ENCODE measurements at regions of chr12 and their contacts with region 1.

Region 1: DNA sequence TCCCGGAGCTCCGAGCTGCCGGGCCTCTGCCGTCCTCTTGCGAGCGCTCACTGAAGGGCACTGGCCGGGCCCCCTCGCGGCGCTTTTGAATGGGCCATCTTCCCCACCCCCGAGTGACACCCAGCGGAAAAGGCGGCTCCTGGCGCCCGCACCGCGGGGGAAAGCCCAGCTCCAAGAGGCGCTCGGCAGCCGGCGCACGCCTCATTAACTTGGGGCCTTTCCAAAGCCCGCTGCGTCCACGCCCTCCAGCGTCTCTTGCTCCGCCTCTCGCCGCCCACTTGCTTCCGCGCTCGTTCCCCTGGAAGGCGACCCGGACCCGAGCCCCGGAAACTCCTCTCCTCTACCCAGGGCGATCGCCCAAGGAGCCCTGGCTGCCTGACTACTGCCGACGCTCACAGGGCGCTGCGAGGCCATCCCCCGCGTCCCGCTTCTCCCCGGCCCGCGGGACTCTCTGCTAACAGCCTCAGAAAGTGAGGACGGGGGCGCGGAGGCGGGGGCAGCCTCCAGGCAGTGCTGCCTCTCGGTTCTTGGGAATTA is at the start of gene PHLDA1:
- DNase-seq: peak in 1 of 2 experiments; percentile 84
- H3K4me3 ChIP-seq: peak within 1 kb of the TSS; percentile 89 to 94 (median 92)
- H3K27ac ChIP-seq: peak within 1 kb of the TSS; percentile 54; the same call in 1 of the 2 replicates
- H3K4me1 ChIP-seq: peaks cover 0 to 11% (median 2%) of the 10 kb centered on the region in 4 experiments; a peak in 5 of 7 replicates
- H3K27me3 ChIP-seq: no peaks in the 10 kb centered on the region; a peak in 1 of 7 replicates
- CTCF ChIP-seq: peak; percentile 39 to 74 (median 42)
- EP300 ChIP-seq: no peak
- POLR2A ChIP-seq: peak; percentile 2 to 42; a peak in 1 of 3 replicates
- RAD21 ChIP-seq: peak; percentile 64 to 68
- total RNA-seq, gene PHLDA1: 19.4 and 19.8 TPM in 2 replicates

Region 2: GRCh38 chr12:75480469-75480949 is 551.1 kb before region 1 on chr12 and contains the start of gene GLIPR1:
- CTCF ChIA-PET with region 1: interaction called, 12 read pairs
- POLR2A ChIA-PET with region 1: interaction called, 3 read pairs
- DNase-seq: no peak
- H3K4me3 ChIP-seq: no peak within 1 kb of the TSS
- H3K27ac ChIP-seq: no peak within 1 kb of the TSS
- H3K4me1 ChIP-seq: peaks cover 0 to 8% (median 5%) of the 10 kb centered on the region in 4 experiments; a peak in 5 of 7 replicates
- H3K27me3 ChIP-seq: no peaks in the 10 kb centered on the region
- CTCF ChIP-seq: no peak
- EP300 ChIP-seq: no peak
- POLR2A ChIP-seq: no peak
- RAD21 ChIP-seq: no peak
- total RNA-seq, gene GLIPR1: 1.5 and 1.7 TPM in 2 replicates

Region 3: DNA sequence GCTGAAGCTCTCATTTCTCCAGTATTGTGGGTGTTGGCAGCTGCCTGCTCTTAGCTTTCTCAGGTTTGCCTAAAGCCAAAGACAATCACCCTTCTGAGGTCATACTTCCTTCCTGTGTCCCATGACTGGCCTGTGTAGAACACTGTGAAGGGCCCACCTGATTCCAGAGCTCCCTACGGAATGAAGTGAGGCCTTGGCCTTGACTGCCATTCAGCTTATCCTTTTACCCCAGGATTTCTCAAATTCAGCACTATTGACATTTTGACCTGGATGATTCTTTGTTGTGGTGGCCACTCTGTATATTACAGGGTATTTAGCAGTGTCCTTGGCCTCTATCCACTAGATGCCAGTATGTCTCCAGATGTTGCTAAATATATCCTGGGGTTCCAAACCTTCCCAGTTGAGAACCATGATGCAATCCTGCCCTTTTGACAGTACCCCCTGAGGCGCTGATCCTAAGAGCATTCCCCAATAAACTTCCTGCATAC is 407.9 kb before region 1 on chr12:
- CTCF ChIA-PET with region 1: interaction called, 32 read pairs
- POLR2A ChIA-PET with region 1: interaction called, 4 read pairs
- DNase-seq: no peak
- H3K4me3 ChIP-seq: no peak overlapping the region
- H3K27ac ChIP-seq: no peak overlapping the region
- H3K4me1 ChIP-seq: peaks cover 0 to 4% (median 0%) of the 10 kb centered on the region in 4 experiments; a peak in 1 of 7 replicates
- H3K27me3 ChIP-seq: no peaks in the 10 kb centered on the region
- CTCF ChIP-seq: peak in 2 of 3 experiments; percentile 67 to 85; a peak in 3 of 4 replicates
- EP300 ChIP-seq: no peak
- POLR2A ChIP-seq: no peak
- RAD21 ChIP-seq: peak; percentile 87 to 92

Region 4: DNA sequence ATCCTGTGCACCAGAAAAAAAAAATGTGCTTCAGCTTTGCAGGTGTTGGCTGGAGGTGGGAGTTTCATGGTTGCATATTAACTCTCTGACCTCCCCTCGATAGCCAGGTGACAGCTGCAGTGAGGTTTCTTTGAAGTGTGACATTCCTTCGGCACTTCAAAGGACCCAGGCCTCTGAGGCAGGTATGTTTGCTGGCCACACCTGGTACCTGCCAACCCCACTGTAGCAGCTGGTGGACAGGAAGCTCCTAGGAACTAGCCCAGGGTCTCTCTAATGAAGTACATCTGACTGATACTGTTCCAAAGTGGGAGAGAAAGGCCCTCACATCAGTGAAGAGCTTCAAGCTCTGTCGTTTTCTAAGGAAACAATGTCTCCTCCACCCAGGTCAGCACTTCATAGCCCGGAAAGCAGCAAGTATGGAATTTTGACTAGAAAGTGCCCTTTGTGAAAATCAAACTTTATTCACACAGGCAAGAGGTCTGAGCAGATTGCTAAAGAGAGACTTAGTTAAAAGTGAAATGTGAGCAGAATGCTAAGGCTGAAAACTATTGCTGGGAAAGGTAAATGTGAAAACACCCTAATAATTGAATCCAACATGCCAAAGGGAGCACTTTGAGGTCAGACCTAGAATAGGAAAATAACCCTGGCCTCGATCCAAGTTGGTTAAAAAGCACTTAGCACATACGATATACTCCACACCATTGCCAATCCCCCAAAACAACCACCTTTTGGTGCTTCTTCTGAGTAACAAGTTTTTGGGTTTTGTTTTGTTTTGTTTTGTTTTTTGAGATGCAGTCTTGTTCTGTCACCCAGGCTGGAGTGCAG is 71.3 kb before region 1 on chr12:
- CTCF ChIA-PET with region 1: interaction called, 3 read pairs
- POLR2A ChIA-PET with region 1: interaction called, 12 read pairs
- DNase-seq: peak in 1 of 2 experiments; percentile 62
- H3K4me3 ChIP-seq: peak overlapping the region in 1 of 4 experiments; percentile 32; a peak in 1 of 8 replicates
- H3K27ac ChIP-seq: no peak overlapping the region
- H3K4me1 ChIP-seq: peaks cover 0 to 14% (median 7%) of the 10 kb centered on the region in 4 experiments; a peak in 5 of 7 replicates
- H3K27me3 ChIP-seq: no peaks in the 10 kb centered on the region
- CTCF ChIP-seq: no peak
- EP300 ChIP-seq: peak in 1 of 2 experiments; percentile 85; a peak in 1 of 3 replicates
- POLR2A ChIP-seq: no peak
- RAD21 ChIP-seq: 0 out of 4 replicates have a peak, but pooled peaks of 1 of the 2 experiments have one; percentile 5

Region 5: GRCh38 chr12:76010732-76011458 is 20.7 kb before region 1 on chr12:
- CTCF ChIA-PET with region 1: no interaction called
- POLR2A ChIA-PET with region 1: interaction called, 10 read pairs
- DNase-seq: no peak
- H3K4me3 ChIP-seq: no peak overlapping the region
- H3K27ac ChIP-seq: no peak overlapping the region
- H3K4me1 ChIP-seq: peaks cover 0 to 9% (median 6%) of the 10 kb centered on the region in 4 experiments; a peak in 6 of 7 replicates
- H3K27me3 ChIP-seq: no peaks in the 10 kb centered on the region
- CTCF ChIP-seq: no peak
- EP300 ChIP-seq: no peak
- POLR2A ChIP-seq: no peak
- RAD21 ChIP-seq: no peak

Region 6: DNA sequence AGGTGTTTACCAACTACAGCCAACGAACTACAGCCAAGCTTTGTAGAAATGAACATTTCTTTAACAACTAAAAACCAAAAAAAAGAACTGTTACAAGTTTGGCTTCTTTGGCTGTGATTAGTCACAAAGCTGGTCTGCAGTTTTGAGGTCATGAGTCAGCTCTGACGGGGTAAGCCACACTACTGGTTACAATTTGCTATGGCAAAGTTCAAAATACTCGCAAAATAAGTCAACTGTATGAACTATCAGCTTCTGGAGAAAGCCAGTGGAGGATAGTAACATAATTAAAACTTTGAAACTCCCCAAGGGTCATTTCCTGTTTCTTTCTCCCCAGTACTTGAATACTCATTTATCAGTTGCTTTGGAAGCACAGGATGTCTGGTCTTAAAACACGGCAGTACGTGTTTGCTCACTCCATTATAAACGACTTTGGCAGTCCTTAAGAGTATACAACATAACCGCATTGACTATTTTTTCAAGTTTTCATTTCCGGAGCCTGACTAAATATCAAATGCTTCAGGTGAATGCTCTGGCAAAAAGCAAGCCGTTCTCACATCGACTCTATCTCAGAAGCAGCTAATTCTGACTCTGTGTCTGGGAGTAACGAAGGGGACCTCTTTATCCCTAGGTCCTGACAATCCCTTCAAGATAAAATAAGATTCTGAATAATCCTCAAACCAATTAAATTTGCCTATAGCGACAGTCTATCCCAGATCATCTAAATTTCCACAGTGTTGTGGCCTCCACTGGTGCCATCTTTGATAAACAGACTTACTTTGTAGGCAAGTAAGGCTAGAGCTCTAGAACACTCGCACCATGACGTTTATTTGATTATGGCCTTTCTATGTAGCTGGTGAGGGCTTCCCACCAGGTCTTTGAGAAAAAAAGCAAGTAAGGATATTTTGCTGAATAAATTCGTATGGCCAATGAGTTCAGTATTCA is 10.6 kb before region 1 on chr12:
- CTCF ChIA-PET with region 1: interaction called, 4 read pairs
- POLR2A ChIA-PET with region 1: interaction called, 29 read pairs
- DNase-seq: no peak
- H3K4me3 ChIP-seq: no peak overlapping the region
- H3K27ac ChIP-seq: no peak overlapping the region
- H3K4me1 ChIP-seq: peaks cover 6 to 17% (median 11%) of the 10 kb centered on the region in 4 experiments; a peak in 5 of 7 replicates
- H3K27me3 ChIP-seq: no peaks in the 10 kb centered on the region
- CTCF ChIP-seq: no peak
- EP300 ChIP-seq: no peak
- POLR2A ChIP-seq: no peak
- RAD21 ChIP-seq: no peak

Measured in H1 (cell line).